GM12878 (cell line): ENCODE measurements at regions of chr19 and their contacts with region 1.

Region 1: GRCh38 chr19:6668691-6669090 is 1.3 kb downstream of the TNFSF14 start:
- DNase-seq: no peak
- ATAC-seq: peak; percentile 7
- H3K4me3 ChIP-seq: peak overlapping the region; percentile 74
- H3K27ac ChIP-seq: peak overlapping the region; percentile 81
- H3K4me1 ChIP-seq: peaks cover 16% of the 10 kb centered on the region
- H3K27me3 ChIP-seq: no peaks in the 10 kb centered on the region
- CTCF ChIP-seq: no peak
- EP300 ChIP-seq: no peak
- POLR2A ChIP-seq: no peak
- RAD21 ChIP-seq: no peak

Region 2: GRCh38 chr19:6617368-6617767 is 51.3 kb before region 1 on chr19:
- CTCF ChIA-PET with region 1: no interaction called
- POLR2A ChIA-PET with region 1: no interaction called
- RAD21 ChIA-PET with region 1: no interaction called
- SMC1A ChIA-PET with region 1: no interaction called
- in situ Hi-C with region 1: no loop called
- intact Hi-C with region 1: no loop called
- DNase-seq: no peak
- ATAC-seq: no peak
- H3K4me3 ChIP-seq: no peak overlapping the region
- H3K27ac ChIP-seq: no peak overlapping the region
- H3K4me1 ChIP-seq: peaks cover 3% of the 10 kb centered on the region; the same call in 1 of the 2 replicates
- H3K27me3 ChIP-seq: no peaks in the 10 kb centered on the region
- CTCF ChIP-seq: no peak
- EP300 ChIP-seq: no peak
- POLR2A ChIP-seq: no peak
- RAD21 ChIP-seq: no peak

Region 3: DNA sequence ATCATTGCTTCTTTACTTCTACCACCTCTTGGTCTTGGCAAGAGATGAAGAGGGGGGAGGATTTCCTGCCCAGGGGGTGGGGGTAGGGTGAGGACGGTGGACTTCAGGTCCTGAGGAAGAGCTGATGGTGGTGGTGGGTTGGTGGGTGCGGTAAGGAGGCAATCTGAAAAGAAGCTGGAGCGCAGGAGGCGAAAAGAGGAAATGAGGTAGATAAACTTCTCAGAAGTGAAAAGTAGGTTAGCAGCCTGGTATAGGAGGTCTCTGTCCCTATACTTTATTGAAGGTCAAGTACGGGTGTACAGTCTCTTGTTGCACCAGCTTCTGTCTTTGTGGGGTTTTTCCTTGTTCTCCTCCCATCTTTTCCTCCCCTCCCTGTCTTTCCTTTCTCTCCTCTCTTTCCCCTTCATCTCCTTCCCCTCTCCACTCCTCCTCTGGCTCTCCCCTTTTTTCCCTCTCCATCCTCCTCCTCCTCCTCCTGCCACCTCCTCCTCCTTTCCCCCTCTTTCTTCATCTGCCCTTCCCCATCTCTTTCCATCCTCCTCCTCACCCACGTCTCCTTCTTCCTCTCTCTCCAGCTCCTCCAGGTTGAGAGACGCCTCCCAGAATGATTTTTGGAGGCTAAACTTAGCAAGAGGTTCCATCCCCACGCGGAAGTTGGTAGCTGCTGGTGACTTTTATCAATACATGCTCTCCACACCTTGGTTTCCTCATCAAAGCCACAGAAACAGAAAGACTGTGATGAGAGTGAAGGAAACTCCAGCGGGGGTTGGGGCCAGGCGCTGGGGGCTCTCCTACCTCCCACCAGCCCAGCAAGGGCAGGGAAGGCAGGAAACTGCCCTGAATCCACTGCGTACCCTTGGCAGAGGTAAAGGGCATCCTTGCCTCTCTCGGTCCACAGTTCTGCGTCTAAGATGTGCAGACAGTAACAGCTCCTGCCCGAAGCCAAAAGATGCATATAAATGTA is 14.1 kb before region 1 on chr19:
- CTCF ChIA-PET with region 1: interaction called, 16 read pairs
- POLR2A ChIA-PET with region 1: interaction called, 22 read pairs
- RAD21 ChIA-PET with region 1: interaction called, 23 read pairs
- SMC1A ChIA-PET with region 1: interaction called, 9 read pairs
- in situ Hi-C with region 1: no loop called
- intact Hi-C with region 1: no loop called
- DNase-seq: no peak
- ATAC-seq: peak; percentile 91
- H3K4me3 ChIP-seq: peak overlapping the region; percentile 37; the same call in 1 of the 2 replicates
- H3K27ac ChIP-seq: peak overlapping the region; percentile 85
- H3K4me1 ChIP-seq: peaks cover 17% of the 10 kb centered on the region
- H3K27me3 ChIP-seq: no peaks in the 10 kb centered on the region
- CTCF ChIP-seq: no peak
- EP300 ChIP-seq: no peak
- POLR2A ChIP-seq: no peak
- RAD21 ChIP-seq: no peak